ENCODE measurements at regions of chr2 and their contacts with region 1.

Region 1: DNA sequence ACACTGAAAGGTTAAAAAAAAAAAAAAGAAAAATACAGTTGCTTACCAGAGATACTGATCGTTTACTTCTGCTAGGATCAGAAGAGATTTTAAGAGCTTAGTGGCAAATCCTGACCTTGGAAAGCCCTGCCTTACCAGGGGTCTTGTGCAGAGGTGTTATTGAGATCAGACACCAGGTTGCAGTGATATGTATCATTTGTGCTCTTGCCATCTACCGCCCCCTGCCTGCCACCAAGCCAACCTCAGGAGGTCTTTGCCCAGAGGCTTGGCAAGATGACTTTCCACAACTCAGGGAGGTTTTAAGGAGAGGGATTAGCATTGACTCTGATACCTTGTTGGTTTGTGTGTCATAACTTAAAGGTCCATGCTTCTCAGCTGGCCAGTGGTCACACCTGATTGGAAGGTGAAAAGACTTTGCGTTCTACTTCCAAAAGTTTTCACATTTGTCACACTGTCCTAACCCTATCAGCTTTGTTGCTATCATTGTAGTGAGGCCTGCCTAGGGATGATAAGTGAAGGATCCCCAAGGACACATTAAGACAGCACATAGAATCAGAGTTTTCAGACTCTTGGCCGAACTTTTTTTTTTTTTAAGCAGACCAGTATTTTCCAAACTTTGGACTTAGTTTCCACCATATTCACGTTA is 46.2 kb upstream of the MGAT5 start:
- DNase-seq: peak; percentile 24 to 80 (median 62)
- ATAC-seq: peak; percentile 67 to 94 (median 80)
- H3K4me3 ChIP-seq: no peak overlapping the region
- H3K4me3 Mint-ChIP-seq: no peak overlapping the region
- H3K27ac ChIP-seq: no peak overlapping the region
- H3K27ac Mint-ChIP-seq: peak overlapping the region; percentile 74 to 77
- H3K4me1 ChIP-seq: peaks cover 25 to 26% of the 10 kb centered on the region in 2 experiments
- H3K4me1 Mint-ChIP-seq: peaks cover 4 to 11% (median 9%) of the 10 kb centered on the region in 3 donors
- H3K27me3 ChIP-seq: no peaks in the 10 kb centered on the region
- H3K27me3 Mint-ChIP-seq: no peaks in the 10 kb centered on the region

Region 2: DNA sequence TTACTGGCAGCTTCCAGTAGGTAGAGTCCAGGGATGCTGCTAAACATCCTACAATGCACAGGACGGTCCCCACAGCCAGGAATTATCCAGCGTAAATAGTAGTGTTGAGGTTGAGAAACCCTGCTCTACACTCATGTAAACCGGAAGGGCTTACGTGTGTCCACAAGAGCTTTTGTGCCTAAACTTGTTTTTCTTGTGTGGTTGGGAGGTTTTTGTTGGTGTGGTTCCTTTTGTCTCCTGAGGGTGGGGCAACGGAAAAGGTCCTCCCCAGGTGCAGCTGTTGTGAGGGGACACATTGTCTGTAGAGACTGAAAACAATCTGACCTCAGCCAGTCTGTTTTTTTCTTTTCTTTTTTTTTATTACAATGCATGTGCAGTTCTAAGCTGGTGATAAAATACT is 26.5 kb before region 1 on chr2:
- CTCF ChIA-PET with region 1: interaction called, 5 to 12 read pairs
- POLR2A ChIA-PET with region 1: no interaction called
- DNase-seq: peak; percentile 20 to 88 (median 59)
- ATAC-seq: peak; percentile 86 to 91 (median 89)
- H3K4me3 ChIP-seq: no peak overlapping the region
- H3K4me3 Mint-ChIP-seq: peak overlapping the region; percentile 50 to 56 (median 55)
- H3K27ac ChIP-seq: peak overlapping the region; percentile 65
- H3K27ac Mint-ChIP-seq: peak overlapping the region; percentile 92 to 95
- H3K4me1 ChIP-seq: peaks cover 30 to 55% of the 10 kb centered on the region in 2 experiments
- H3K4me1 Mint-ChIP-seq: peaks cover 92 to 94% (median 94%) of the 10 kb centered on the region in 3 donors
- H3K27me3 ChIP-seq: no peaks in the 10 kb centered on the region
- H3K27me3 Mint-ChIP-seq: no peaks in the 10 kb centered on the region

Region 3: DNA sequence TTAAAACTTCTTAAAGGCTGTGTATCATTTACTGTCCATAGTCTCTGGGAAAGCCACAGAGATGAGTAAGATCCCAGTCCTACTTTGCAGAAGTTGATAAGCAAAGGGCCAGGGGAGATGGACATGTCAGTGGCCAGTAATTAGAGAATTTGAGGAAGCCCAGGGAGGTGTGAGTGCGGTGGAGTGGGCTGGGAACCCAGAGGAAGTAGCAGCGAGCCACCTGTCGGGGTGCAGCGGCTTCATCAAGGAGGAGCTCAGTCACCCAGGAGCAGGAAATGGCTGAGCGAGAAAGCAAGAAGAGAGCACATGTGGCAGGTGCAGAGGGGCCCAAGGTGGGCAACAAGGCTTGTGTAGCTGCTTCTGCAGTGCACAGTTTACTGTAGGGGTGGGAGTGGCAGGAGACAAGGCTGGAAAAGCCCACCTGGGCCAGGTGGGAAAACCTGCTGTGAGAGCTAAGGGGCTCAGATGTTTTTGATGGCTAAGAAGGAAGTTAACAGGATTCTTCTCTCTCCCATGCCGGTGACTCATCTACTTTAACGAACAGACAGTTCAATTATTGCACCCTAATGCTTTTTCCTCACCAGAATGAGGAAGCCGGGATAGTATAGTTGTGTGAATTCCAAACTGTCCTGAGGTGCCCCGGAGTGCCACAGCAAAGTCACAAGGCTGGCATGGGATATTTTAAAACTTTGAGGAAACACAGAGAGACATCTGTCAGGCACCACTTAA is 11.4 kb after region 1 on chr2:
- CTCF ChIA-PET with region 1: interaction called, 21 to 31 read pairs
- POLR2A ChIA-PET with region 1: interaction called in 1 of 2 experiments, 3 read pairs
- DNase-seq: peak in 34 of 35 experiments; percentile 21 to 63 (median 38)
- ATAC-seq: peak; percentile 70 to 84 (median 78)
- H3K4me3 ChIP-seq: peak overlapping the region; percentile 5 to 15
- H3K4me3 Mint-ChIP-seq: peak overlapping the region; percentile 48 to 75 (median 61)
- H3K27ac ChIP-seq: peak overlapping the region; percentile 84
- H3K27ac Mint-ChIP-seq: peak overlapping the region; percentile 88 to 94
- H3K4me1 ChIP-seq: peaks cover 44 to 48% of the 10 kb centered on the region in 2 experiments
- H3K4me1 Mint-ChIP-seq: peaks cover 59 to 77% (median 66%) of the 10 kb centered on the region in 3 donors
- H3K27me3 ChIP-seq: no peaks in the 10 kb centered on the region
- H3K27me3 Mint-ChIP-seq: no peaks in the 10 kb centered on the region

Region 4: GRCh38 chr2:134245340-134245984 is 37.8 kb after region 1 on chr2:
- CTCF ChIA-PET with region 1: interaction called, 14 to 33 read pairs
- POLR2A ChIA-PET with region 1: no interaction called
- DNase-seq: peak; percentile 45 to 84 (median 71)
- ATAC-seq: peak; percentile 33 to 61 (median 41)
- H3K4me3 ChIP-seq: no peak overlapping the region
- H3K4me3 Mint-ChIP-seq: peak overlapping the region in 2 of 3 donors; percentile 26 to 37
- H3K27ac ChIP-seq: peak overlapping the region; percentile 13
- H3K27ac Mint-ChIP-seq: peak overlapping the region; percentile 50 to 82
- H3K4me1 ChIP-seq: peaks cover 50 to 64% of the 10 kb centered on the region in 2 experiments
- H3K4me1 Mint-ChIP-seq: peaks cover 87 to 95% (median 94%) of the 10 kb centered on the region in 3 donors
- H3K27me3 ChIP-seq: no peaks in the 10 kb centered on the region
- H3K27me3 Mint-ChIP-seq: no peaks in the 10 kb centered on the region

Region 5: GRCh38 chr2:134284119-134284670 is 76.5 kb after region 1 on chr2:
- CTCF ChIA-PET with region 1: interaction called in 1 of 2 experiments, 3 read pairs
- POLR2A ChIA-PET with region 1: interaction called in 1 of 2 experiments, 11 read pairs
- DNase-seq: no peak
- ATAC-seq: no peak
- H3K4me3 ChIP-seq: no peak overlapping the region
- H3K4me3 Mint-ChIP-seq: peak overlapping the region in 1 of 3 donors; percentile 24
- H3K27ac ChIP-seq: no peak overlapping the region
- H3K27ac Mint-ChIP-seq: peak overlapping the region; percentile 92
- H3K4me1 ChIP-seq: peaks cover 60 to 79% of the 10 kb centered on the region in 2 experiments
- H3K4me1 Mint-ChIP-seq: peaks cover 46 to 62% (median 53%) of the 10 kb centered on the region in 3 donors
- H3K27me3 ChIP-seq: peaks cover 0 to 3% of the 10 kb centered on the region in 2 experiments
- H3K27me3 Mint-ChIP-seq: no peaks in the 10 kb centered on the region

Region 6: DNA sequence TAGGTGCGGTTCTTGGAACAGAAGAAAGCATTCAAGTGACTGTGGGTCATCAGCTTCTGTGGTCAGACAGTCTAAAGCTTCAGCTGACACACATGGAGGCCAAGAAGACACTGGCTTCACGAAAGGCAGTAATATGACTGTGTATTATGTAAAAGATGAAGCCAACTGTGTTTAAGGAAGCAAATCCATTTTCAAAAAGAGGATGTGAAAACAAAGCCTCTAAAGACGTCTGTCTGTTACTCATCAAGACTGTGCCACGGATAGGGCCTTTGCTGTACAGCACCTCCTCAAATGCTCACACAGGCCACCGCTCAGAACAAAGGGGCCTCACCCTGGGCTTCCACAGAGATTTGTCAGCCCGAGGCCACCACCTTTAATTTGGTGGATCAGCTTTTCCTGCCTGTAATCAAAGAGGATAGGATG is 532.2 kb after region 1 on chr2:
- CTCF ChIA-PET with region 1: no interaction called
- POLR2A ChIA-PET with region 1: no interaction called
- DNase-seq: peak in 1 of 35 experiments; percentile 37
- ATAC-seq: peak in 2 of 4 experiments; percentile 32 to 34
- H3K4me3 ChIP-seq: no peak overlapping the region
- H3K4me3 Mint-ChIP-seq: no peak overlapping the region
- H3K27ac ChIP-seq: no peak overlapping the region
- H3K27ac Mint-ChIP-seq: no peak overlapping the region
- H3K4me1 ChIP-seq: no peaks in the 10 kb centered on the region
- H3K4me1 Mint-ChIP-seq: peaks cover 3% of the 10 kb centered on the region in 3 donors
- H3K27me3 ChIP-seq: peaks cover 0 to 28% of the 10 kb centered on the region in 2 experiments
- H3K27me3 Mint-ChIP-seq: peaks cover 8 to 27% of the 10 kb centered on the region in 2 donors

Measured in T-cell (primary cell).